ENCODE measurements at regions of chr5 and their contacts with region 1.

Region 1: GRCh38 chr5:102955488-102955887 is 164.4 kb downstream of the GIN1 start:
- DNase-seq: no peak
- H3K4me3 ChIP-seq: no peak overlapping the region
- CTCF ChIP-seq: no peak

Region 2: DNA sequence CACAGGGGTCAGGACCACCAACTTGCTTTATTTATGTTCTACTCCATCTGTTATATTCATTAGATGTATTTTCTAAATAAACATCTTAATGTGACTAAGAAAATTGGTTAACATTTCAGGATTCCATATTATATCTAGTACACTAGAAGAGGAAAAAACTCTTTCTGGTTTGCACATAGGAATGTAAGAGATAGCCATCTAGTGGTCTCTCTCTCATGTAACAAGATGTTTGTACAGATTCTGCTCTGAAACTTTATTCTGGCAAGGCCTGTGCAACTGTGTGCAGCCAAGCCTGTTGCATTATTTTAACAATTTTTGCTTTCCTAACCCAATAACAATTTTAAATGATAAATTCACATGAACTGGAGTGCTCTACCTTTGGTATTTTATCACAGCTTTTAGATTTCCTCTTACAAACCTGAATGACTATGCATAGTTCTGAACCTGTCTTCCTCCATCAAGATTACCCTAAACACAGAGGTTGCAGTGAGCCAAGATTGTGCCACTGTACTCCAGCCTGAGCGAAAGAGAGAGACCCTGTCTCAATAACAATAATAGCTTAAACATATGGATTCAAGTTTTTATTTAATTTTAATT is 16.3 kb after region 1 on chr5:
- CTCF ChIA-PET with region 1: interaction called, 15 read pairs
- POLR2A ChIA-PET with region 1: no interaction called
- DNase-seq: peak; percentile 23
- H3K4me3 ChIP-seq: no peak overlapping the region
- CTCF ChIP-seq: peak; percentile 42

Region 3: DNA sequence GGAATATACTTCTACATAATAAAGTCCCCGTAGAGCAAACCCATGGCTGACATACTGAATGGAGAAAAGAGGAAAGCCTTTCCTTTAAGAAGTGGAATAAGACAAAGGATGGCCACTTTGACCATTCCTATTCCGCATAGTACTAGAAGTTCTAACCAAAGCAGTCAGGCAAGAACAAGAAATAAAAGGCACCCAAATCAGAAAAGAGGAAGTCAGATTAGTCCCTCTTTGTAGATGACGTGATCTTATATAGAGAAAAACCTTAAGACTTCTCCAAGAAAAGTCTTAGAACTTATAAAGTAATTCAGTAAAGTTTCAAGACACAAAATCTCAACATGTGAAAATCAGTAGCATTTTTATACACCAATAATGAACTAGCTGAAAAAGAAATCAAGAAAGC is 30.6 kb after region 1 on chr5:
- CTCF ChIA-PET with region 1: no interaction called
- POLR2A ChIA-PET with region 1: no interaction called
- DNase-seq: no peak
- H3K4me3 ChIP-seq: no peak overlapping the region
- CTCF ChIP-seq: no peak